CD4-positive, alpha-beta T cell (primary cell): ENCODE measurements at regions of chr2 and their contacts with region 1.

Region 1: GRCh38 chr2:11743846-11744553 is 2.4 kb upstream of the LPIN1 start:
- DNase-seq: peak; percentile 43 to 91 (median 62)
- ATAC-seq: peak; percentile 30
- H3K4me3 ChIP-seq: peak overlapping the region; percentile 34
- H3K4me3 Mint-ChIP-seq: peak overlapping the region; percentile 78
- H3K27ac ChIP-seq: peak overlapping the region in 1 of 2 donors; percentile 61
- H3K27ac Mint-ChIP-seq: peak overlapping the region; percentile 76
- H3K4me1 ChIP-seq: peaks cover 52% of the 10 kb centered on the region
- H3K4me1 Mint-ChIP-seq: peaks cover 54% of the 10 kb centered on the region
- H3K27me3 ChIP-seq: no peaks in the 10 kb centered on the region
- H3K27me3 Mint-ChIP-seq: no peaks in the 10 kb centered on the region
- CTCF ChIP-seq: no peak

Region 2: DNA sequence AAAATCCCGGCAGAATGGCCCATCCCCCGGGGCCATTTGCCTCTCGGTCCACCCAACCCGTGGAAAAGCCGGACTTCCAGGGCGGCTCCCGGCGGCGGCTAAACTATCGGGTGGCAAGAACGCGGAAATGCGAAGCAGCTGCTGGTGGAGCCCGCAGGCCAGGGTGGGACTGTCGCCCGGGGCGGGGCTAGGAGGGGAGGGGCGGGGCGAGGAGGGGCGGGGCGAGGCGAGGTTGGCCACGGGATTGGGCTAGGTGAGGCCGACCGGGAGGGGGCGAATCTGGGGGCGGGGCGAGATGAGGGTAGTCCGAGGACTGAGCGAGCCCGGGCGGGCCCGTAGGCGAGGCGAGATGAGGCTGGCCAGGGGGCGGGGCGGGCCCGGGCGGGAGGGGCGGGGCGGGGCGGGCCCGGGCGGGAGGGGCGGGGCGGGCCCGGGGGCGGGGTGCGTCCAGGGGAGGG is 589.0 kb before region 1 on chr2:
- CTCF ChIA-PET with region 1: no interaction called
- POLR2A ChIA-PET with region 1: no interaction called
- intact Hi-C with region 1: loop called in 1 of 2 experiments (anchors 5 kb)
- DNase-seq: peak; percentile 97 to 99 (median 99)
- ATAC-seq: peak; percentile 89
- H3K4me3 ChIP-seq: peak overlapping the region; percentile 60
- H3K4me3 Mint-ChIP-seq: peak overlapping the region; percentile 92
- H3K27ac ChIP-seq: peak overlapping the region; percentile 74 to 78
- H3K27ac Mint-ChIP-seq: peak overlapping the region; percentile 90
- H3K4me1 ChIP-seq: peaks cover 34% of the 10 kb centered on the region
- H3K4me1 Mint-ChIP-seq: peaks cover 24% of the 10 kb centered on the region
- H3K27me3 ChIP-seq: no peaks in the 10 kb centered on the region
- H3K27me3 Mint-ChIP-seq: no peaks in the 10 kb centered on the region
- CTCF ChIP-seq: no peak

Region 3: GRCh38 chr2:11389551-11390528 is 354.2 kb before region 1 on chr2:
- CTCF ChIA-PET with region 1: no interaction called
- POLR2A ChIA-PET with region 1: no interaction called
- intact Hi-C with region 1: no loop called
- DNase-seq: no peak
- ATAC-seq: no peak
- H3K4me3 ChIP-seq: no peak overlapping the region
- H3K4me3 Mint-ChIP-seq: no peak overlapping the region
- H3K27ac ChIP-seq: no peak overlapping the region
- H3K27ac Mint-ChIP-seq: no peak overlapping the region
- H3K4me1 ChIP-seq: no peaks in the 10 kb centered on the region
- H3K4me1 Mint-ChIP-seq: no peaks in the 10 kb centered on the region
- H3K27me3 ChIP-seq: no peaks in the 10 kb centered on the region
- H3K27me3 Mint-ChIP-seq: no peaks in the 10 kb centered on the region
- CTCF ChIP-seq: no peak

Region 4: DNA sequence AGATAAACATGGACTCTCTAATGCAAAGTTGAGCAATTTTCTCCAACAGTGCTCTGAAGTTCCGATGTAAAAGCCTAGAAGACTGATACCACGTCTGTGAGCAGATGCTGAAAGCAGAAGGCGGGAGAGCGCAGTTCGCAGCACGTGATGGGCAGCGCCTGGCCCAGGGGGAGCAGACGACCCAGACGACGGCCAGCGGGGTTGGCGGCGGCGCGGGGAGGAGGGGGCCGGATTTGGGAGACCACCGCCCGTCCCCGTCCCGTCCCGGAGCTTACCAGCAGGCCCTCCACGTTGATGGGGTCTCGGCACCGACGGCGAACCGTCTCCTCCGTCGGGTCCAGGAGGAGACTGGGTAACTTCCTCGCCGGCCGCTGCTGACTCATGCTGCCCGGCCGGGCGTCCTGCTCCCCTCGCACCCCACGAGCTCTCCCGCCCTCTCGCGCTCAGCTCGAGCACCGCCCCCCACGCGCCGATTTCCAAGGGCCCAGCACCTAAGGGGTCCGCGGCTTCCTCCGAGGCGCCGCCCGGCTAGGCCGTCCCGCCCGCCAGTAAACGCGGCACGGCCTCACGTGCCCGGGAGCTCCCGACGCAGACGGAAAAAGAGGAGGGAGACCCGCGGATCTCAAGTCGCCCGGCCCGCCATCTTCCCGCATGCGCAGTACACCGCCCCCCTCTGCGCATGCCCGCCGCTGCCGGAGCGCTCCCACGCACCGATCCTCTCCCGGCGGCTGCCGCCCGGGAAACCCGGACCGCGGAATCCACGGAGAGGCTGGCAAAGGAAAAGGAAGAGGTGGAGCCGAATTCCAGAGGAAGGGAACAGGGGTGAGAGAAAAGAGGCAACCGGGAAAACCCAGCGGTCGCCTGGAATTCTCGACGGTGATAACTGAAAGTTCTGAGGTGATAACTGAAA is 278.2 kb before region 1 on chr2 and contains the start of gene E2F6:
- CTCF ChIA-PET with region 1: no interaction called
- POLR2A ChIA-PET with region 1: no interaction called
- intact Hi-C with region 1: loop called in 1 of 2 experiments (anchors 2 kb)
- DNase-seq: peak; percentile 68 to 88 (median 81)
- ATAC-seq: peak; percentile 81
- H3K4me3 ChIP-seq: peak within 1 kb of the TSS; percentile 92
- H3K4me3 Mint-ChIP-seq: peak within 1 kb of the TSS; percentile 98
- H3K27ac ChIP-seq: peak within 1 kb of the TSS in 1 of 2 donors; percentile 11
- H3K27ac Mint-ChIP-seq: peak within 1 kb of the TSS; percentile 81
- H3K4me1 ChIP-seq: peaks cover 21% of the 10 kb centered on the region
- H3K4me1 Mint-ChIP-seq: peaks cover 49% of the 10 kb centered on the region
- H3K27me3 ChIP-seq: no peaks in the 10 kb centered on the region
- H3K27me3 Mint-ChIP-seq: no peaks in the 10 kb centered on the region
- CTCF ChIP-seq: no peak
- total RNA-seq, gene E2F6: 3.5 to 4.2 TPM

Region 5: GRCh38 chr2:11701751-11702301 is 42.2 kb before region 1 on chr2:
- CTCF ChIA-PET with region 1: no interaction called
- POLR2A ChIA-PET with region 1: no interaction called
- intact Hi-C with region 1: no loop called
- DNase-seq: peak in 3 of 14 experiments; percentile 32 to 78 (median 70)
- ATAC-seq: peak; percentile 43
- H3K4me3 ChIP-seq: no peak overlapping the region
- H3K4me3 Mint-ChIP-seq: no peak overlapping the region
- H3K27ac ChIP-seq: no peak overlapping the region
- H3K27ac Mint-ChIP-seq: no peak overlapping the region
- H3K4me1 ChIP-seq: peaks cover 8% of the 10 kb centered on the region
- H3K4me1 Mint-ChIP-seq: no peaks in the 10 kb centered on the region
- H3K27me3 ChIP-seq: no peaks in the 10 kb centered on the region
- H3K27me3 Mint-ChIP-seq: no peaks in the 10 kb centered on the region
- CTCF ChIP-seq: no peak

Region 6: DNA sequence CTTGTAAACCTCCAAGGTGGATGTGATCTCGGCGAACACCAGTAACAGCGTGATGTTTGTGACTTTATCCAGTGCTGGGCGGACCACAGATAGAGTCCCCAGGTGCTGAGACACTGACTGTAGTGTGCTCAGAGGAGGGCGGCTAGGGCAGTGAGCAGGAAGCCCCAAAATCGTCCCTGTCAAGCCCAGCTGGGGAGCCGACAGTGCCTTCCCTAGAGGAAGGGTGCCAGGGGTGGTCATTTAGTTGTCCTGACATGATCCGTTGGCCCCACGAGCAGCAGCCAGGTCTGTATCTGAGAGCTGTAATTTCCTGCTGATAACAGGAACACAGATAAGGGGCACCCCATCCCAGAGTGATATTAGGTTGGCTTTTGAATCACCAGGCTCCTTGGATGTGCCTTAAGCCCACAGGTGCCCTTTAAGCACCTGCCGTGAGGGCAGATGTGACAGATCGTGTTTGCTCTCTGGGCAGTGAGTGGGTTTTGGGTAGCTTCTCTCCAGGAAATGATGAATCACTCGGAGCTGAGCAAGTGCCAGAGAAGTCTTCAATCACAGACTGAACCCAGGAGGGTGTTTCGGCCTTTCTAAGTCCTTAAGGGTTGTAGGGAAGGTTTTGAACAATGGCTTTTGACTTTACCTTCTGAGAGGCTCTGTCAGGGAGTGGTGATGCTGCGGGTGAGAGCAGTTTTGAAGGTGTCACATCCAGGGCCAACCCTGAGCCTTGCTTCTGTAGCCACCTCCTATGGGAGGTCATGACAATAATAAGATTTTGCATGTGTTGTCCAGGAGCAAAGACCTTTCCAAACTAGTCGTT is 10.1 kb after region 1 on chr2:
- CTCF ChIA-PET with region 1: interaction called, 6 read pairs
- POLR2A ChIA-PET with region 1: interaction called, 14 read pairs
- intact Hi-C with region 1: no loop called
- DNase-seq: peak; percentile 44 to 86 (median 60)
- ATAC-seq: peak; percentile 47
- H3K4me3 ChIP-seq: peak overlapping the region; percentile 37
- H3K4me3 Mint-ChIP-seq: peak overlapping the region; percentile 80
- H3K27ac ChIP-seq: peak overlapping the region; percentile 80 to 94
- H3K27ac Mint-ChIP-seq: peak overlapping the region; percentile 92
- H3K4me1 ChIP-seq: peaks cover 71% of the 10 kb centered on the region
- H3K4me1 Mint-ChIP-seq: peaks cover 86% of the 10 kb centered on the region
- H3K27me3 ChIP-seq: no peaks in the 10 kb centered on the region
- H3K27me3 Mint-ChIP-seq: no peaks in the 10 kb centered on the region
- CTCF ChIP-seq: no peak

Region 7: GRCh38 chr2:12728221-12728777 is 984.3 kb after region 1 on chr2:
- CTCF ChIA-PET with region 1: no interaction called
- POLR2A ChIA-PET with region 1: no interaction called
- intact Hi-C with region 1: loop called in 1 of 2 experiments (anchors 5 kb)
- DNase-seq: peak; percentile 24 to 82 (median 55)
- ATAC-seq: peak; percentile 84
- H3K4me3 ChIP-seq: peak overlapping the region; percentile 31
- H3K4me3 Mint-ChIP-seq: peak overlapping the region; percentile 81
- H3K27ac ChIP-seq: peak overlapping the region; percentile 47 to 51
- H3K27ac Mint-ChIP-seq: peak overlapping the region; percentile 81
- H3K4me1 ChIP-seq: peaks cover 85% of the 10 kb centered on the region
- H3K4me1 Mint-ChIP-seq: peaks cover 99% of the 10 kb centered on the region
- H3K27me3 ChIP-seq: no peaks in the 10 kb centered on the region
- H3K27me3 Mint-ChIP-seq: no peaks in the 10 kb centered on the region
- CTCF ChIP-seq: no peak